ENCODE measurements at regions of chr7 and their contacts with region 1.

Region 1: GRCh38 chr7:6516387-6516983 is 34.8 kb downstream of the GRID2IP start:
- DNase-seq: peak; percentile 91
- H3K4me3 ChIP-seq: peak overlapping the region; percentile 47
- H3K27ac ChIP-seq: no peak overlapping the region
- H3K4me1 ChIP-seq: no peaks in the 10 kb centered on the region
- H3K27me3 ChIP-seq: no peaks in the 10 kb centered on the region

Region 2: DNA sequence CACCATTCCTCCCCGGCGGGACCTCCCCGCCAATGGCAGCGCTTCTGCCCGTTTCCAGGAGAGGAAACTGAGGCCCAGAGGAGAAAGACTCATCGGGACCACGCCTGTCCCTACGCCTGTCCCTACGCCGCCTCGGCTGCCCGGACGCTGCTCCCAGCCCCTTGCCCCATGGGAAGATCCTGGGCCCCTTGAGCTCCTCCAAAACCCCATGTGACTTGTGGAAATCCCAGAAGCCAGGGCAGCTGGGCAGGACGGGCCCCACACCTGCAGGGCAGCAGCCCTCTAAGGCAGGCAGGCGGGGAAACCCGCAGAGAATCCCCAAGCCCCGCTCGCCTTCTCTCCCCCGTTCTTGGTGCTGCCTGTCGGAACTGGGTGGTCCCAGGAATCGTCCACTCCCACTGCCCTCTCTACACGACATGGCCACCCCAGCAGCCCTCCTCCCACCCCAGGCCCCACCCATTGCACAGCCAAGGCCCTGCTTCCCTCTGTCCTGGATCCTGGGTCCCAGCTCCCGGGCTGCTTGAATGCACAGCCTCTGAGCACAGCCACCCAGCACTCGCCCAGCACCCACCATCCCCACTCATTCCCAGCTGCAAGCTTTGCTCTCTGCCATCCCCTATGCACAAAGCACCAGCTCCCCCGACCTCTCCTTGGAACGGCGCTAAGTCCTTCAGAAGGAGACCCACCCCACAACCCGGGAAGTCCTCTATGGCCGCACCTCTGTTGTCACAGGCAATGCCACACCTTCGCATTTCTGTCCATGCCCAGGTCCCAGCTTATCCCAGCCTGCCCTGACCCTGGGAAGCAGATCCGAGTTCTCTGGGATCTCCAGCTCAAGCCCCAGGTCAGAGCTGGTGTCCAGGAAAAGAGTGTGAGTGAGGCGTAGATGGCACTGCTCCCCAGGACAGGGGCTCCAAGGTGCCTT is 1183.1 kb before region 1 on chr7:
- in situ Hi-C with region 1: no loop called
- DNase-seq: no peak
- H3K4me3 ChIP-seq: no peak overlapping the region
- H3K27ac ChIP-seq: no peak overlapping the region
- H3K4me1 ChIP-seq: no peaks in the 10 kb centered on the region
- H3K27me3 ChIP-seq: no peaks in the 10 kb centered on the region

Region 3: GRCh38 chr7:5854738-5855137 is 661.7 kb before region 1 on chr7:
- in situ Hi-C with region 1: loop called (anchors 10 kb)
- DNase-seq: no peak
- H3K4me3 ChIP-seq: no peak overlapping the region
- H3K27ac ChIP-seq: no peak overlapping the region
- H3K4me1 ChIP-seq: no peaks in the 10 kb centered on the region
- H3K27me3 ChIP-seq: no peaks in the 10 kb centered on the region

Measured in GM23248 (cell line).